Gastrocnemius medialis (tissue), 4 donors: ENCODE measurements at regions of chr14 and their contacts with region 1.

Region 1: GRCh38 chr14:23301288-23301968 is 1.2 kb downstream of the PPP1R3E start:
- DNase-seq: peak; percentile 97 to 98
- ATAC-seq: peak; percentile 73 to 78
- H3K4me3 ChIP-seq: peak overlapping the region; percentile 72 to 87 (median 82)
- H3K27ac ChIP-seq: peak overlapping the region; percentile 96 to 99 (median 98)
- H3K4me1 ChIP-seq: peaks cover 30 to 32% of the 10 kb centered on the region in 2 donors
- H3K27me3 ChIP-seq: no peaks in the 10 kb centered on the region
- CTCF ChIP-seq: peak; percentile 60 to 94 (median 79)
- POLR2A ChIP-seq: peak; percentile 84 to 88

Region 2: GRCh38 chr14:22598099-22598899 is 703.1 kb before region 1 on chr14 and contains the start of gene ABHD4:
- in situ Hi-C with region 1: loop called in 3 of 4 experiments (anchors 25 kb)
- intact Hi-C with region 1: loop called (anchors 10 kb)
- DNase-seq: peak; percentile 74 to 83
- ATAC-seq: peak; percentile 89 to 92
- H3K4me3 ChIP-seq: peak within 1 kb of the TSS; percentile 77 to 91 (median 85)
- H3K27ac ChIP-seq: peak within 1 kb of the TSS; percentile 89 to 98 (median 94)
- H3K4me1 ChIP-seq: peaks cover 21 to 30% of the 10 kb centered on the region in 2 donors
- H3K27me3 ChIP-seq: no peaks in the 10 kb centered on the region
- CTCF ChIP-seq: no peak
- POLR2A ChIP-seq: peak; percentile 80 to 89
- total RNA-seq, gene ABHD4: 17.1 to 38.7 (median 27.6) TPM

Region 3: GRCh38 chr14:23095196-23096108 is 206.0 kb before region 1 on chr14 and contains the start of gene C14orf119:
- in situ Hi-C with region 1: loop called in 2 of 4 experiments (anchors 25 kb)
- intact Hi-C with region 1: loop called (anchors 1 kb)
- DNase-seq: peak; percentile 100
- ATAC-seq: peak; percentile 96 to 97
- H3K4me3 ChIP-seq: peak within 1 kb of the TSS; percentile 73 to 99 (median 82)
- H3K27ac ChIP-seq: peak within 1 kb of the TSS; percentile 91 to 100 (median 96)
- H3K4me1 ChIP-seq: peaks cover 27 to 32% of the 10 kb centered on the region in 2 donors
- H3K27me3 ChIP-seq: no peaks in the 10 kb centered on the region
- CTCF ChIP-seq: peak in 1 of 5 experiments; percentile 4
- POLR2A ChIP-seq: peak; percentile 56 to 69
- total RNA-seq, gene C14orf119: 9.5 to 28.8 (median 13.8) TPM

Region 4: GRCh38 chr14:23259426-23259825 is 42.0 kb before region 1 on chr14:
- in situ Hi-C with region 1: no loop called
- intact Hi-C with region 1: loop called (anchors 2 kb)
- DNase-seq: no peak
- ATAC-seq: no peak
- H3K4me3 ChIP-seq: no peak overlapping the region
- H3K27ac ChIP-seq: no peak overlapping the region
- H3K4me1 ChIP-seq: no peaks in the 10 kb centered on the region
- H3K27me3 ChIP-seq: peaks cover 3 to 5% (median 5%) of the 10 kb centered on the region in 3 donors
- CTCF ChIP-seq: no peak
- POLR2A ChIP-seq: no peak

Region 5: DNA sequence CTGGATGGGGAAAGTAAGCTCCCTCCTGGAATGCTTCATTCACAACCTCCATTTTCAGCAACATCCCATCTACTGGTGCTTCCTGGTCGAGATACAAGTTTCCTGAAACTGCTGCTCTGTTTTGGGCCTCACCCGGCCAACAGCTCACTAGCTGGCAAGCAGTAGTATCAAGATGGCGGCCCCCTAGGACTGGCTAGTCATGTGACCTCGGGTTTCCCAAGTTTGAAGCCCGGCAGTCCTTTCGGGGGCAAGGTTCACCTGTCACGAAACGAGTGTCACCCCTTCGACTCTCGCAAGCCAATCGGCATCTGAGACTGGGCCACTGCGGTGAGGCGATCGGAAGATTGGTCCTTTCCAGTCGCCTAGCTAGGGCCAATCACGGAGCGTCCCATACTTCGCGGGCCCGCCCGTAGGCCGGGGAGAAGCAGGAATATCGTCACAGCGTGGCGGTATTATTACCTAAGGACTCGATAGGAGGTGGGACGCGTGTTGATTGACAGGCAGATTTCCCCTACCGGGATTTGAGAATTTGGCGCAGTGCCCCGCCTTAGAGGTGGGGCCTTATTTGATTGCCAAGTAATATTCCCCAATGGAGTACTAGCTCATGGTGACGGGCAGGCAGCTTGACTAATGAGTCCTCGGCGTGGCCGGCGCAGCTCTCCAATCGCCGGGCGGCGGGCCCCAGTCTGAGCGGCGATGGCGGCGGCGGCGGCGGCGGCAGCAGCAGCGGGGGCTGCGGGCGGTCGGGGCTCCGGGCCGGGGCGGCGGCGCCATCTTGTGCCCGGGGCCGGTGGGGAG is 19.5 kb after region 1 on chr14 and contains the start of gene PABPN1:
- in situ Hi-C with region 1: no loop called
- intact Hi-C with region 1: loop called (anchors 1 kb)
- DNase-seq: peak; percentile 99 to 100
- ATAC-seq: peak; percentile 92 to 96
- H3K4me3 ChIP-seq: peak within 1 kb of the TSS; percentile 90 to 100 (median 96)
- H3K27ac ChIP-seq: peak within 1 kb of the TSS; percentile 98 to 100 (median 99)
- H3K4me1 ChIP-seq: peaks cover 13 to 25% of the 10 kb centered on the region in 2 donors
- H3K27me3 ChIP-seq: no peaks in the 10 kb centered on the region
- CTCF ChIP-seq: no peak
- POLR2A ChIP-seq: peak; percentile 83 to 86
- total RNA-seq, gene PABPN1: 15.7 to 32.8 (median 26.6) TPM

Region 6: GRCh38 chr14:24141097-24141880 is 839.9 kb after region 1 on chr14 and contains the start of gene EMC9:
- in situ Hi-C with region 1: loop called in 1 of 4 experiments (anchors 25 kb)
- intact Hi-C with region 1: no loop called
- DNase-seq: peak; percentile 100
- ATAC-seq: peak; percentile 89 to 92
- H3K4me3 ChIP-seq: peak within 1 kb of the TSS; percentile 74 to 94 (median 79)
- H3K27ac ChIP-seq: peak within 1 kb of the TSS; percentile 95 to 99 (median 98)
- H3K4me1 ChIP-seq: peaks cover 40 to 54% of the 10 kb centered on the region in 2 donors
- H3K27me3 ChIP-seq: no peaks in the 10 kb centered on the region
- CTCF ChIP-seq: peak; percentile 60 to 89 (median 80)
- POLR2A ChIP-seq: peak; percentile 94 to 95
- total RNA-seq, gene EMC9: 13.6 to 18.8 (median 16.3) TPM

Region 7: DNA sequence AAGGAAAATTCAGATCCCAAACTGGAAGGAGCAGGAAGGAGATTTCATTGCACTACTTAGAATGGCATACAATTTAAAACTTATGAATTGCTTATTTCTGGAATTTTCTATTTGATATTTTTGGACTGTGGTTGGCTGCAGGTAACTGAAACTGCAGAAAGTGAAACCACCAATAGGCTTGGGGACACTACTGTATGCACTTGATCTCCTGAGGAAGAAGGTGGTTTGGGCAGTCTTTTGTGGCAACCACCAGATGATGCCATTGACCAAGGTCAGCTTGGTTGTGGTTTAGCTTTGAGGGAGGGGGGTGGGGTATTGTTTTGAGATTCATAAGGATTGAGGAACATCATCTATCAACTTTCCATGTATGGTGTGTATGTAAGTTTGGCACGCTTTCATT is 1958.0 kb after region 1 on chr14:
- in situ Hi-C with region 1: no loop called
- intact Hi-C with region 1: no loop called
- DNase-seq: no peak
- ATAC-seq: no peak
- H3K4me3 ChIP-seq: no peak overlapping the region
- H3K27ac ChIP-seq: no peak overlapping the region
- H3K4me1 ChIP-seq: no peaks in the 10 kb centered on the region
- H3K27me3 ChIP-seq: no peaks in the 10 kb centered on the region
- CTCF ChIP-seq: no peak
- POLR2A ChIP-seq: no peak